ENCODE measurements at regions of chr7 and their contacts with region 1.

Region 1: DNA sequence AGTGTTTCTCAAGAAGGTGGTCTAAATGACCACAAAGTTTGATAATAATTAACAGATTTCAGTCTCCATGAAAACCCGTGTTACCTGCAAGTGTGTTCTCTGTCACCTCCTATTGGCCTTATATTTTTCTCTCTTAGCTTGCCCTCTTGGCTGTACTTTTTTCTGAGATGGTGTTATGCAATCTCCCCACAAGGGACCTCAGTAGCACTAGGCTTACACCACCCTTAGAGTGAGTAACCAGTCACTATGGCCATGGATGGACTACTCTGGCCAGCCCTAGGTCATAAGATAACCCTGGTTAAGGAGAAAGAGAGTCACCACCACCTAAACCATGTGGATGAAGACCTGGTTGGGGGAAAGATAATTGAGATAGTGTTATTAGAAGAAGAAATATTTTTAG is 76.8 kb downstream of the NPSR1 start:
- DNase-seq: no peak
- ATAC-seq: peak; percentile 51
- H3K4me3 ChIP-seq: no peak overlapping the region
- H3K27ac ChIP-seq: no peak overlapping the region
- H3K4me1 ChIP-seq: no peaks in the 10 kb centered on the region
- H3K27me3 ChIP-seq: no peaks in the 10 kb centered on the region
- CTCF ChIP-seq: no peak
- EP300 ChIP-seq: no peak
- POLR2A ChIP-seq: no peak
- RAD21 ChIP-seq: no peak

Region 2: GRCh38 chr7:34718867-34719266 is 15.9 kb before region 1 on chr7:
- CTCF ChIA-PET with region 1: interaction called, 32 read pairs
- POLR2A ChIA-PET with region 1: interaction called, 8 read pairs
- RAD21 ChIA-PET with region 1: interaction called, 11 read pairs
- SMC1A ChIA-PET with region 1: interaction called, 220 read pairs
- in situ Hi-C with region 1: no loop called
- intact Hi-C with region 1: no loop called
- DNase-seq: no peak
- ATAC-seq: peak; percentile 91
- H3K4me3 ChIP-seq: no peak overlapping the region
- H3K27ac ChIP-seq: no peak overlapping the region
- H3K4me1 ChIP-seq: no peaks in the 10 kb centered on the region
- H3K27me3 ChIP-seq: no peaks in the 10 kb centered on the region
- CTCF ChIP-seq: no peak
- EP300 ChIP-seq: no peak
- POLR2A ChIP-seq: no peak
- RAD21 ChIP-seq: no peak

Region 3: DNA sequence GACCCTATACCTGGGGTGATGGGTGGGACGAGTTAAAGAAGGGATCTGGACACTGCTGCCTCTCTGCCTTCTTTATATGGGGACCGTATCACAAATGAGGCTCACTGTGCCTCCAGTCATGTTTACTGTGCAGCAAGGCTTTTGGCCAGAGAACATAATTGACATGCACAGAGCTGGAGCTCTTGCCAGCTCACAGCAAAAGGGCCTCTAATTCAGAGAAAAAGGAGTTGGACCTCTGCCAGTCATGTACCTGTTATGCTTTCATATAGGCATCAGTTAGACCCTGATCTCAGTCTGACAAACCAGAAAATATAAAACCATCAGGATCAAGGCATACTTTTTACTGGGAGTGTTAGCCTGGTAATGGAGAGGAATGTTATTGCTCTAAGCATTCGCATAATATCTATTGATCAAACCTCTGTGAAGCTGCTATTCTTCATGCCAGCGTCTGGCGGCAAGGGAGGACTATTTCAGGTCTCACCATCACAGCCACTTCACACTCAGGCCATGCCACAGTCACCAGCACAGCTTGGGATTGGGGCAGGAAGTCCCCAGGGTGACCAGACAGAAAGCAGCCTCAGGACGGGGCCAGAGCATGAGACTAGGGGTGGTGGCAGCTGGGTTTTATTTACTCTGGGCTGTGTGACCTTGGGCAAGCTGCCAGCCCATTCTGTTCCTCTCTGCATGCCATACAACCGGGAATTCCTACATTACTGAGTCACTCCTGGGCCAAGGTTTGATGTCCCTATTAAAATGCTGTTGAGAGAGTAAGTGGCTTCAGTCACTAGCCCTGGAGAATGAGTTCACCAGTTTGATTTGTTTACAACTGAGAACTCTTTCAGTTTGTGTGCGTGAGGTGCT is 13.3 kb after region 1 on chr7:
- CTCF ChIA-PET with region 1: interaction called, 46 read pairs
- POLR2A ChIA-PET with region 1: interaction called, 22 read pairs
- RAD21 ChIA-PET with region 1: interaction called, 362 read pairs
- SMC1A ChIA-PET with region 1: interaction called, 220 read pairs
- in situ Hi-C with region 1: no loop called
- intact Hi-C with region 1: no loop called
- DNase-seq: no peak
- ATAC-seq: peak; percentile 64
- H3K4me3 ChIP-seq: no peak overlapping the region
- H3K27ac ChIP-seq: no peak overlapping the region
- H3K4me1 ChIP-seq: no peaks in the 10 kb centered on the region
- H3K27me3 ChIP-seq: no peaks in the 10 kb centered on the region
- CTCF ChIP-seq: peak in 1 of 3 experiments; percentile 24; a peak in 2 of 6 replicates
- EP300 ChIP-seq: no peak
- POLR2A ChIP-seq: no peak
- RAD21 ChIP-seq: no peak